ENCODE measurements at regions of chr3 and their contacts with region 1.

Region 1: GRCh38 chr3:142828703-142829305 is 60.1 kb downstream of the PCOLCE2 start:
- DNase-seq: peak; percentile 75
- H3K4me3 ChIP-seq: no peak overlapping the region
- H3K27ac ChIP-seq: no peak overlapping the region
- H3K4me1 ChIP-seq: no peaks in the 10 kb centered on the region
- H3K27me3 ChIP-seq: peaks cover 3 to 21% of the 10 kb centered on the region in 2 experiments
- CTCF ChIP-seq: peak; percentile 86
- POLR2A ChIP-seq: no peak

Region 2: DNA sequence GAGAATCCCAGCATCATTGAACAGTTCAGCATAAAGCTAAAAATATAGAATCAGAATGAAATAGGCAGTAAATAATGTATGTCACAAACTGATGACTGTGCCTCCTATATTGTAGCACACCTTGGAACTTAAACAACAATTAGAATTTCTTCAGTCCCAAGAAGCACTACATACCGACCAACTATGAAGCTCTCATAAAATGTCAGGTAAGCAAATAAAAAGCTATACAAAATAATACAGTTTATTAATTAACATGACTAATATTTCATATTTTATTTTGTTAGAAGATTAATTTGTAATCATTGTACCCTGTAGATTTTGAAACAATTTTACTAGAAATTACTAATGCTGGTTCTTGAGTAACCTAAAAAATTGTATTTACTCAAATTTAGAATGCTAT is 518.4 kb before region 1 on chr3:
- CTCF ChIA-PET with region 1: no interaction called
- POLR2A ChIA-PET with region 1: no interaction called
- dilution Hi-C with region 1: no loop called
- intact Hi-C with region 1: no loop called
- DNase-seq: no peak
- H3K4me3 ChIP-seq: no peak overlapping the region
- H3K27ac ChIP-seq: no peak overlapping the region
- H3K4me1 ChIP-seq: no peaks in the 10 kb centered on the region
- H3K27me3 ChIP-seq: no peaks in the 10 kb centered on the region
- CTCF ChIP-seq: no peak
- POLR2A ChIP-seq: no peak

Region 3: GRCh38 chr3:142586803-142587406 is 241.9 kb before region 1 on chr3:
- CTCF ChIA-PET with region 1: interaction called, 39 read pairs
- POLR2A ChIA-PET with region 1: no interaction called
- dilution Hi-C with region 1: no loop called
- intact Hi-C with region 1: loop called (anchors 1 kb)
- DNase-seq: peak; percentile 79
- H3K4me3 ChIP-seq: no peak overlapping the region
- H3K27ac ChIP-seq: no peak overlapping the region
- H3K4me1 ChIP-seq: no peaks in the 10 kb centered on the region
- H3K27me3 ChIP-seq: peaks cover 8 to 14% of the 10 kb centered on the region in 2 experiments
- CTCF ChIP-seq: peak; percentile 46 to 57
- POLR2A ChIP-seq: no peak

Region 4: DNA sequence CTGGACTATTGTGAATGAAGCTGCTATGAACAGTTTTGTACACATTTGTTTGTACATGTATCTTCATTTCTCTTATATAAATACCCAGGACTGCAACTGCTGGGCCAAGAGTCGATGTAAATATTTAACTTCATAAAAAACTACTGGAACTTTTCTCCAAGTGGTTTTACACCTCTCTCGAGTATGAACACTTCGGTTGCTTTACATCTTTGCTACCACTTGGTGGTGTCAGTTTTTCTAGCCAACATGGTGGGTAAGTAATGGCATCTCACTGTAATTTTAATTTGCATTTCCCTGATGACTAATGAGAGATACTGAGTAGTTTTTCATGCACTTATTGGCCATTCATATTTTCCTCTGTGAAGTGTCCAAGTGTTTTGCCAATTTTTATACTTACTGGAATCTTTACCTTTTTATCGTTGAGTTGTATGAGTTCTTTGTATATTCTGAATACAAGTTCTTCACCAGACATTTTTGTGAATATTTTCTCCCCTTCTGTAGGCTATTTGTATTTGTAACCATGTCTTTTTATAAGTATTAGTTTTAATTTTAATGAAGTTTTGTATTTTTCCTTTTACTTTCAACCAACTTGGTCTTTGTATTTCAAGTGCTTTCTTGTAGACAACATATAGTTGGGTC is 15.7 kb after region 1 on chr3:
- CTCF ChIA-PET with region 1: interaction called, 32 read pairs
- POLR2A ChIA-PET with region 1: no interaction called
- dilution Hi-C with region 1: no loop called
- intact Hi-C with region 1: no loop called
- DNase-seq: peak; percentile 46
- H3K4me3 ChIP-seq: no peak overlapping the region
- H3K27ac ChIP-seq: no peak overlapping the region
- H3K4me1 ChIP-seq: no peaks in the 10 kb centered on the region
- H3K27me3 ChIP-seq: peaks cover 2 to 9% of the 10 kb centered on the region in 2 experiments
- CTCF ChIP-seq: peak; percentile 25 to 49
- POLR2A ChIP-seq: no peak

Region 5: DNA sequence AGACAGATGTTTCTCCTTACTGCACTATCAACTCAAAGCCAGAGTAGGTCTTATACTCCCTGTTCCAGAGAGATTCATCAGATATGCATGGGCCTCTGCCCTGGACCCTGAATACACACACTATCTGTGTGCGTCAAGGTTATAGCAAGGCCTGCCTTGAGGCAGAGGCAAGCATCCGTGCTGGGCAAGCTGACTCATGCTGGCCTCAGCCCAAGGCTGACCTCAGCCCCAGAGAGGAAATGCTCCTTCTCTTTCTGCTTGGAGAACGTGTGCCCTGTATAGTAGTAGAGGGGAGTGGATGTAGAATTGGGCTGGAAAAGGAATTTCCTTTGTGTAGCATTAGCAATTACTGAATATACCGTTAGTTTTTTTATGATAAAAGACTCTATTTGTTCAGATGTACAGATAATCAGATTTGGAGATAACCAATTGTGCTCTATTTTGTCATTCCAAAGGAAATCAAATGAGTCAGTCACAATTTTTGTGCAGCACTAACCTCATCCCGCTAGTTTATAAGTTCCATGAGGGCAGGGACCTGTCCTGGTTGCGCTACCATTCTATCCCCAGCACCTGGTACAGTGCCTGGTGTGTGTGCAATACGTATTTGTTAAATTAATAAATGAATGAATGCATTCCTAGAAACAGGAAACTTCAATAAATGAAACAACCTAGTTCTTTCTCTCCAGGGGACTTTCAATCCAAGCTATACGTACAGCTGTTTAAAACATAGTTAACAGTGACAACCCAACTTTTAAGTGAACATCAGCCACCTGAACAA is 148.0 kb after region 1 on chr3:
- CTCF ChIA-PET with region 1: interaction called, 11 read pairs
- POLR2A ChIA-PET with region 1: no interaction called
- dilution Hi-C with region 1: no loop called
- intact Hi-C with region 1: no loop called
- DNase-seq: peak; percentile 92
- H3K4me3 ChIP-seq: no peak overlapping the region
- H3K27ac ChIP-seq: peak overlapping the region; percentile 27
- H3K4me1 ChIP-seq: peaks cover 14% of the 10 kb centered on the region
- H3K27me3 ChIP-seq: peaks cover 4 to 8% of the 10 kb centered on the region in 2 experiments
- CTCF ChIP-seq: no peak
- POLR2A ChIP-seq: no peak

Region 6: GRCh38 chr3:142993958-142994442 is 165.2 kb after region 1 on chr3:
- CTCF ChIA-PET with region 1: interaction called, 94 read pairs
- POLR2A ChIA-PET with region 1: no interaction called
- dilution Hi-C with region 1: no loop called
- intact Hi-C with region 1: loop called (anchors 1 kb)
- DNase-seq: peak; percentile 61
- H3K4me3 ChIP-seq: no peak overlapping the region
- H3K27ac ChIP-seq: no peak overlapping the region
- H3K4me1 ChIP-seq: no peaks in the 10 kb centered on the region
- H3K27me3 ChIP-seq: peaks cover 6 to 12% of the 10 kb centered on the region in 2 experiments
- CTCF ChIP-seq: peak; percentile 54 to 56
- POLR2A ChIP-seq: no peak

Region 7: DNA sequence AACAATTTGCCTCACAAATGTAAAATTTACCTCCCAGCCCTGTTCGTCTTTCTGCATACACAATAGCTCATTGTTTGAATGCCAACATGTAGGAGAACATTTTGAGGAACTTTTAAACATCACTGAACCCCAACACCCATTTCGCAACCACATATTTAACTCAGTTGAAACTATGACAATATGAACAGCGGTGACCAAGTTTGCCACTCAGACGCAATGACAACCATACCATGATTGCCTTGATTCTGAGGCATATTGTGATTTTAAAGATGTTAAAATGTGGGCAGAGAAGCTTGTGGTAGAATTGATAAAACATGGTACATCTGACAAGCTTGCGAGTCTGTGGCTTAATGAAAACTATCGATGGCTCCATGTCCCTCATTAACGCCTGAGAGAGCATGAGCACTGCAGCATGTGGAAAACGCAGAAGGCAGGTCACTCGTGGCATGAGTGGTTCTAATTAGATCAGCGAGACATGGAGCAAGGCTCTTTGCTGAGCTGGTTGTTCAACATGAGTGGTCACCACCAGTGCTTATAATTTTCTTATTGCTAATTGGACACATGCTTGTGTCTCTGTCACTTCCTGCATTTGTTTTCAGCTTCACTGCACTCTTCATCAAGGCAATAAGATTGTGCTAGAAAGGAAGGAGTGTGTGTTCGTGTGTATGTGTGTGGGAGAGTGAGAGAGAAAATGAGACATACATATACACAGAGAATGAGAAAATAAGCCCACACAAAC is 407.6 kb after region 1 on chr3:
- CTCF ChIA-PET with region 1: no interaction called
- POLR2A ChIA-PET with region 1: no interaction called
- dilution Hi-C with region 1: no loop called
- intact Hi-C with region 1: no loop called
- DNase-seq: peak; percentile 19
- H3K4me3 ChIP-seq: no peak overlapping the region
- H3K27ac ChIP-seq: no peak overlapping the region
- H3K4me1 ChIP-seq: peaks cover 24% of the 10 kb centered on the region
- H3K27me3 ChIP-seq: no peaks in the 10 kb centered on the region
- CTCF ChIP-seq: no peak
- POLR2A ChIP-seq: no peak

Region 8: GRCh38 chr3:143252931-143253330 is 424.1 kb after region 1 on chr3:
- CTCF ChIA-PET with region 1: no interaction called
- POLR2A ChIA-PET with region 1: no interaction called
- dilution Hi-C with region 1: no loop called
- intact Hi-C with region 1: no loop called
- DNase-seq: no peak
- H3K4me3 ChIP-seq: no peak overlapping the region
- H3K27ac ChIP-seq: no peak overlapping the region
- H3K4me1 ChIP-seq: no peaks in the 10 kb centered on the region
- H3K27me3 ChIP-seq: no peaks in the 10 kb centered on the region
- CTCF ChIP-seq: no peak
- POLR2A ChIP-seq: no peak

Region 9: GRCh38 chr3:143507735-143508580 is 679.2 kb after region 1 on chr3:
- CTCF ChIA-PET with region 1: no interaction called
- POLR2A ChIA-PET with region 1: no interaction called
- dilution Hi-C with region 1: no loop called
- intact Hi-C with region 1: no loop called
- DNase-seq: no peak
- H3K4me3 ChIP-seq: no peak overlapping the region
- H3K27ac ChIP-seq: no peak overlapping the region
- H3K4me1 ChIP-seq: no peaks in the 10 kb centered on the region
- H3K27me3 ChIP-seq: no peaks in the 10 kb centered on the region
- CTCF ChIP-seq: no peak
- POLR2A ChIP-seq: no peak

Region 10: DNA sequence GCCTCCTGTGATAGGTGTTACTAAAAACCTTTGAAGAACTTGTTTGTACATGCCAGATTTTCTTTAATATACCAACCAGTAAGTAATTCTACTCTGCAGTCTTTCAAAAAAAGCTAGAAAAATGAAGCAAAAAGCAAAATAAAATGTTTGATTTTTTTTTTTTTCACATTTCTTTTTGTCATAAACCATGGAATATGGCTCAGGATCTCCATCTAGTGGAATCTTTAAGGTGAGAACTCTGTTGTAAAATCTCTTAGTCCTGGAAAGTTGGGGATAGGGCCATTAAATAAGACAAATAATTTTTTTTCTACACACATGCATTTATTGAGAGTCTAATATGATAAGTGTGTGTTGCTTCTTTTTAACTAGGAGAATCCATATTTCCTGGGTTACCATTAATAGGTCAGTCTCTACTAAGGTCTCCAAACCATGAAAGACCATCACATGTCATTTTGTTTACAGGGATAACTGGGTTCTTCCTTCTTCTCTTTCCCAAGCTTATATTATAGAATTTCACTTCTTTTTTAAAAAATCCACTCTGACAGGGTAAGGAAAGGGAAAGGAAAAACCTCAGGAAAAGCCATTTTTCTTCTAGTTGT is 934.9 kb after region 1 on chr3:
- CTCF ChIA-PET with region 1: interaction called, 13 read pairs
- POLR2A ChIA-PET with region 1: no interaction called
- dilution Hi-C with region 1: no loop called
- intact Hi-C with region 1: loop called (anchors 2 kb)
- DNase-seq: peak; percentile 38
- H3K4me3 ChIP-seq: no peak overlapping the region
- H3K27ac ChIP-seq: no peak overlapping the region
- H3K4me1 ChIP-seq: no peaks in the 10 kb centered on the region
- H3K27me3 ChIP-seq: no peaks in the 10 kb centered on the region
- CTCF ChIP-seq: peak; percentile 18 to 22
- POLR2A ChIP-seq: no peak